Activated T-helper 1 cell treated with anti-CD3 and anti-CD28 coated beads, Interleukin-12 subunit alpha, Interleukin-12 subunit beta, Interleukin-2, Interleukin-4 antibody, amounts not matched to agents 30 ng/mL and 10 ng/mL and 1 ng/mL, durations not matched to agents 14 hours and 24 hours and 36 hours (primary cell): ENCODE measurements at regions of chr16 and their contacts with region 1.

Region 1: DNA sequence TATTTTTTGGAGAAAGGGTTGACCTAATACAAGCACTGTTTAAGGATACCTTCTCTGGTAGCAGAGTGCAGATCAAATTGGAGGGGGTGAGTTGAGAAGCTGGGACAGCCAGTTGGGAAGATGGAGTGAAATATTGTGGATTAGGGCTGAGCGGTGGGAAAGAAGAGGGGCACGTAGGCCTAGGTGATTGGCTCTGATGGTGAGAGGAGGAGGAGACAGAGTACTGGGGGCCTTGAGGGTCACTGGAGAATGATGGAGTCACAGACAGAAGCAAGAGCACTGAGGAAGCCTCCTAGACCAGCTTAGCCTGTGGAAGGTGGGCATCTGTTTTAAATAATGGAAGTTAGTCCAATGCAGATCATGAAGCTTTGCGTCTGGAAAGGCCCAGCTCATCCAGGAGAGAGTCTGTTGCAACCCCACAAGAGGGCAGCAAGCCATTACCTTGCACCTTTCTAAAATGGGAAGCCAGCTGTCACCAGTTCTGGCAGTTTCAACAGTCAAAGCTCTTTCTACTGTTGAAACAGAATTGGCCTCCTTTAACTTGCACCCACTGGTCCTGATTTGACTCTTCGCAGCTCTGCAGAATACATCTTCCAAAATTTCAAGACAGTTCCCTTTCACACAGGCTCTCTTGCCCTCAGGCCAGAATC is 11.8 kb downstream of the SLC9A5 start:
- DNase-seq: no peak
- H3K4me3 Mint-ChIP-seq: no peak overlapping the region
- H3K27ac Mint-ChIP-seq: no peak overlapping the region
- H3K4me1 Mint-ChIP-seq: no peaks in the 10 kb centered on the region
- H3K27me3 Mint-ChIP-seq: peaks cover 5% of the 10 kb centered on the region

Region 2: GRCh38 chr16:67034487-67034886 is 226.1 kb before region 1 on chr16:
- intact Hi-C with region 1: no loop called
- DNase-seq: no peak
- H3K4me3 Mint-ChIP-seq: peak overlapping the region; percentile 49
- H3K27ac Mint-ChIP-seq: peak overlapping the region; percentile 69
- H3K4me1 Mint-ChIP-seq: peaks cover 69% of the 10 kb centered on the region
- H3K27me3 Mint-ChIP-seq: no peaks in the 10 kb centered on the region

Region 3: DNA sequence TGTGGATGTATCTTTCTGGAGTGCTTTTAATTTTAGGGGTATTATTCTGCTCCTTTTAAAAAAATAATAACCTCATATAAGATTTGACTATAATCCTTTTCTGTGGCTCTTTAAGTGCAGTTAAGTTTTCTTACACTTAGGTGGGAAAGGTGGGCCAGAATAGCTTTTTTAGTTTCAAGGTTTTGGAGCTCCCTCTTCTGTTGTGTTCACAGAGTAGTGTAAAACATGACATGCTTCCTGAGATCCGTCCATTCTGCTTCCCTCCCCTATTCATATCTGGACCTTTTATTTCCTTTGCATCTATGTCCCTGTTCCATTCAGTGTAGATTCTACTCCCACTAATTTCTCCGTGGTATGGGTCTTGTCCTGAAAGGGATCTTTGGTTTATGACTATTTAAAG is 78.9 kb after region 1 on chr16:
- intact Hi-C with region 1: loop called (anchors 2 kb)
- DNase-seq: no peak
- H3K4me3 Mint-ChIP-seq: no peak overlapping the region
- H3K27ac Mint-ChIP-seq: no peak overlapping the region
- H3K4me1 Mint-ChIP-seq: no peaks in the 10 kb centered on the region
- H3K27me3 Mint-ChIP-seq: peaks cover 2% of the 10 kb centered on the region

Region 4: GRCh38 chr16:67399181-67399733 is 138.7 kb after region 1 on chr16:
- intact Hi-C with region 1: loop called (anchors 1 kb)
- DNase-seq: peak; percentile 38
- H3K4me3 Mint-ChIP-seq: no peak overlapping the region
- H3K27ac Mint-ChIP-seq: no peak overlapping the region
- H3K4me1 Mint-ChIP-seq: peaks cover 1% of the 10 kb centered on the region
- H3K27me3 Mint-ChIP-seq: peaks cover 28% of the 10 kb centered on the region

Region 5: DNA sequence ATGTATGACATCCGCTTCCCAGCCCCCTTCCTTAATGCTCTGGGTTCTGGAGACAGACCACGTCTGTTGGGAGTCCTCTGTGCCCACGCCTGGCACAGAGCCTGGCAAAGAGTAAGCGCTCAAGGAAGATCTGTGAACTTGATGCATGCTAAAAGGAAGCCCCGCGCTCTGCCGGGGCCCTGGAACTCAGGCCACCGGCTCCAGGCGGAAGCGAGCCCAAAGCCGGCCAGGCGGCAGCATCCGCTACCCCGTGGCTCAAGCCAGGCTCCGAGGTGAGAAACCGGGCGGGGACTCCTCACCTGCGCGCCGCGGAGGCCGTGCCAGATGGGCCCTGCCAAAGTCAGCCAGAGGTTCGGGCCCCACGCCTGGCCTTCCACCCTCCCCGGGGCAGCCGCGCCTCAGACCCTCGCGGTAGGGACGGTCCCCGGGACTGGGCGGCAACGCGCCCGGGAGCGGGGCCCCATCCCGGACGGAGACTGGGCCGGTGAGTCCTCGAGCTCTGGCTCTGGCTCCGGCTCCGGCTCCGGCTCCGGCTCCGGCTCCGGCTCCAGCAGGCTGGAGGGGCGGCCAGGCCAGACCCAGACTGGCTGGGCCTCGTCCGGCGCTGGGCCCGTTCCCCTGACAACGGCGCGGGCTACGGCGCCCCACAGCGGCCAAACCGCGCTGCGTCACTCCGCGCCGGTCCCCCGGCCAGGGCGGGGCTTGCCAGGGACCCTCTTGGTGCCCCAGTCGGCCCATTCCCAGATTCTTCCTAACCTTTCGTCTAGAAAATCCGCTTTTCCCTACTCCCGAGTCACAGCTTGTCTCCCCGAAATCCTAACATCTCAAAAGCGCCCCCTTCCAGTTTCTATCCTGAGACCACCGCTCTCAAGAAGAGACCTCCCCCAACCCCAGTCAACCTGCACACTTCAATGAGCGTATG is 155.6 kb after region 1 on chr16 and contains the start of gene ZDHHC1:
- intact Hi-C with region 1: loop called (anchors 2 kb)
- DNase-seq: peak; percentile 34
- H3K4me3 Mint-ChIP-seq: peak within 1 kb of the TSS; percentile 84
- H3K27ac Mint-ChIP-seq: peak within 1 kb of the TSS; percentile 50
- H3K4me1 Mint-ChIP-seq: peaks cover 10% of the 10 kb centered on the region
- H3K27me3 Mint-ChIP-seq: peaks cover 44% of the 10 kb centered on the region
- total RNA-seq, gene ZDHHC1: 0.76 and 0.88 TPM in 2 replicates

Region 6: GRCh38 chr16:67447508-67448076 is 187.0 kb after region 1 on chr16:
- intact Hi-C with region 1: loop called (anchors 1 kb)
- DNase-seq: peak; percentile 62
- H3K4me3 Mint-ChIP-seq: no peak overlapping the region
- H3K27ac Mint-ChIP-seq: no peak overlapping the region
- H3K4me1 Mint-ChIP-seq: peaks cover 7% of the 10 kb centered on the region
- H3K27me3 Mint-ChIP-seq: no peaks in the 10 kb centered on the region

Region 7: DNA sequence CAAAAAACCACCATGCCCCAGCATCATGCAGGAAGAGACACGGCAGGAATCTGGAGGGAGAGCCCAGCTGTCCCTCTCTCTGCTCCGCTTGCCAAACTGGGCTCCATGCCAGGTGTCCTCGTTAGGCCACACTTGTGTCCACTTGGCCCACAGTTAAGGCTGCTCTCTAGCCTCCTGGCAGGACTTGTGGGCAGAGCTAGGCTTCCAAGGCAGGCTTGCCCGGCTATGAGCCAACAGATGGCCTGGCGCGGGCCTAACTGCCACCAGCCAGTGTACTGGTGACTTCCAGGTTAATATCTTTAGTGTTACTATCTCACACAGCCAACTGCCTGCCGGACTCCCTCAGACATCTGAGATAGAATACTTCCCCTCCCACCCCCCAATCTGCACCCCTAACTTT is 209.8 kb after region 1 on chr16:
- intact Hi-C with region 1: loop called (anchors 1 kb)
- DNase-seq: no peak
- H3K4me3 Mint-ChIP-seq: no peak overlapping the region
- H3K27ac Mint-ChIP-seq: no peak overlapping the region
- H3K4me1 Mint-ChIP-seq: peaks cover 7% of the 10 kb centered on the region
- H3K27me3 Mint-ChIP-seq: no peaks in the 10 kb centered on the region